Activated CD4-positive, alpha-beta T cell treated with anti-CD3 and anti-CD28 coated beads for 36 hours (primary cell): ENCODE measurements at regions of chr14 and their contacts with region 1.

Region 1: GRCh38 chr14:36339816-36340215 is 19.4 kb upstream of the MBIP start:
- DNase-seq: no peak
- ATAC-seq: peak; percentile 39
- H3K4me3 Mint-ChIP-seq: no peak overlapping the region
- H3K27ac Mint-ChIP-seq: no peak overlapping the region
- H3K4me1 Mint-ChIP-seq: peaks cover 13% of the 10 kb centered on the region
- H3K27me3 Mint-ChIP-seq: peaks cover 27% of the 10 kb centered on the region

Region 2: DNA sequence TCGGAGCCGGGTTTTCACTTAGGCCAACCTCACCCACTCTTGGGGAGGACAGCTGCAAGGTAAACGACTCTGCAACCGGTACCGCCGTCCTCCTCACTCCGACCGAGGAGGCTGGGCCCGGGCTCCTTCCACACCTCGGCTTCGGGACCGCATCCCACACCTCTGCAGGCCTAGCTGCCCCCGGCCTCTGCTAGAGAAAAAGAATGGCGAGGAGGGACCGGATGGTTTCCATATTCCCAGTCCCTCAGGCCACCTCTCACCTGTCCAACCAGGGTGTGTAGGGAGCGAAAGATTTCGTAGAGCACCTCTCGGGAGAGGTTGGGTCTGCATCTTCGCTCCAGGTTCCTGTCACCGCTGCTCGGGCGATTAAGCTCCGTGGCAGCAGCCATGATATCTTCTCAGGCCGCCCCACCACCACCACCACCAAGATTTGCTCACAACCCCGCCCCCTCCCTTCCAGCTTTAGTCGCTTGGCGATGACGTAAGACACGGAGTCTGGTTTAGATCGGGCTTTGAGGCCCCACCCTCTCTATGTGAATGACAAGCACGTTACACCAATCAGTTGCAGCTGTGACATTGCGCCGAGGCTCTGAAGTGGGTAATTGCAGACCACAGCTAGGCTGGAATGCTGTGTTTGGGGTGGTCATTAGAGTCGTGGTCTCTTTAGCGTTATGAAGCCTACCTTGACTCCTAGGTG is 19.5 kb before region 1 on chr14 and contains the start of gene MBIP:
- CTCF ChIA-PET with region 1: interaction called, 4 read pairs
- POLR2A ChIA-PET with region 1: no interaction called
- intact Hi-C with region 1: loop called (anchors 1 to 2 kb)
- DNase-seq: peak; percentile 95
- ATAC-seq: peak; percentile 95
- H3K4me3 Mint-ChIP-seq: peak within 1 kb of the TSS; percentile 85
- H3K27ac Mint-ChIP-seq: peak within 1 kb of the TSS; percentile 94
- H3K4me1 Mint-ChIP-seq: peaks cover 29% of the 10 kb centered on the region
- H3K27me3 Mint-ChIP-seq: peaks cover 10% of the 10 kb centered on the region
- total RNA-seq, gene MBIP: 32.8 to 33.0 TPM